Prostate gland (tissue), 2 donors: ENCODE measurements at regions of chr3 and their contacts with region 1.

Region 1: GRCh38 chr3:112979240-112979832 is 4.4 kb upstream of the CD200R1 start:
- DNase-seq: no peak
- H3K4me3 ChIP-seq: no peak overlapping the region
- H3K27ac ChIP-seq: no peak overlapping the region
- H3K4me1 ChIP-seq: no peaks in the 10 kb centered on the region
- H3K27me3 ChIP-seq: no peaks in the 10 kb centered on the region
- CTCF ChIP-seq: peak; percentile 22 to 68 (median 64)
- POLR2A ChIP-seq: no peak

Region 2: DNA sequence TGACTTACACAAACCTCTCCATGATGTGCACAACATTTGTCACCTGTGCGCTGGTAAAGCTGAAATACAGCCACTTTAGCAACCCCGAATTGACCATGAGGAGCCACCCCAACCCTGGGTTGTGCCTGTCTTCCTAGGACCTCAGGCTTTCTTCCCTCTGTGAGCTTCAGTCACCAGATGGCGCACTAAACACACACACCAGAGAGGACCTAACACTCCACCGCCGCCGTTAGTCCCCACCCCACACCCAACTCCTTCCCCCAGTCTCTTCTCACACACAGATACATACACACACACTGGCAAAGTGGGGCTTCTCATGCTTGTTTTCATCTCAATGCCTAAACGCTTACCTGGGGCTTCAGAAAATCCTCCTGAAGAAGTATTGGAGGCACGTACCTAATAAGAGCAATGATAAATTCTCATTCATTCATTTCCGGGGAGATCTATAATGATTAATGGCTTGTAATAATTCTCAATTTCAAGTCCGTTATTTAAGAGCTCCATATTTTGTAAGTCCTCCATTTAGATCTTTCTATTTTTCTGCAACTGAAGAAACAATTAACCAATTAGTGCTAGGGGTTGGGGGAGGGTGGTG is 336.3 kb before region 1 on chr3:
- intact Hi-C with region 1: loop called (anchors 5 kb)
- DNase-seq: peak; percentile 75
- H3K4me3 ChIP-seq: no peak overlapping the region
- H3K27ac ChIP-seq: no peak overlapping the region
- H3K4me1 ChIP-seq: no peaks in the 10 kb centered on the region
- H3K27me3 ChIP-seq: peaks cover 5% of the 10 kb centered on the region
- CTCF ChIP-seq: peak; percentile 28 to 70 (median 61)
- POLR2A ChIP-seq: no peak

Region 3: GRCh38 chr3:113626503-113627371 is 647.4 kb after region 1 on chr3:
- intact Hi-C with region 1: no loop called
- DNase-seq: peak; percentile 34
- H3K4me3 ChIP-seq: no peak overlapping the region
- H3K27ac ChIP-seq: no peak overlapping the region
- H3K4me1 ChIP-seq: no peaks in the 10 kb centered on the region
- H3K27me3 ChIP-seq: no peaks in the 10 kb centered on the region
- CTCF ChIP-seq: peak; percentile 25 to 79 (median 62)
- POLR2A ChIP-seq: no peak